ENCODE measurements at regions of chr1 and their contacts with region 1.

Region 1: GRCh38 chr1:32933742-32934322 is 30.8 kb downstream of the RNF19B start:
- DNase-seq: no peak
- H3K4me3 ChIP-seq: no peak overlapping the region
- H3K27ac ChIP-seq: no peak overlapping the region
- H3K4me1 ChIP-seq: no peaks in the 10 kb centered on the region; a peak in 1 of 7 replicates
- H3K27me3 ChIP-seq: no peaks in the 10 kb centered on the region; a peak in 1 of 7 replicates
- CTCF ChIP-seq: no peak
- EP300 ChIP-seq: no peak
- POLR2A ChIP-seq: no peak
- RAD21 ChIP-seq: no peak

Region 2: GRCh38 chr1:32900951-32901822 is 32.6 kb before region 1 on chr1 and contains the start of gene TMEM54:
- CTCF ChIA-PET with region 1: interaction called, 22 read pairs
- POLR2A ChIA-PET with region 1: no interaction called
- DNase-seq: peak in 1 of 2 experiments; percentile 69
- H3K4me3 ChIP-seq: peak within 1 kb of the TSS; percentile 38 to 67 (median 42)
- H3K27ac ChIP-seq: no peak within 1 kb of the TSS
- H3K4me1 ChIP-seq: peaks cover 0 to 11% (median 8%) of the 10 kb centered on the region in 4 experiments; a peak in 6 of 7 replicates
- H3K27me3 ChIP-seq: peaks cover 14 to 40% (median 34%) of the 10 kb centered on the region in 4 experiments
- CTCF ChIP-seq: no peak
- EP300 ChIP-seq: no peak
- POLR2A ChIP-seq: no peak
- RAD21 ChIP-seq: no peak
- total RNA-seq, gene TMEM54: 7.3 and 9.5 TPM in 2 replicates

Region 3: GRCh38 chr1:32944180-32944579 is 10.3 kb after region 1 on chr1:
- CTCF ChIA-PET with region 1: interaction called, 11 read pairs
- POLR2A ChIA-PET with region 1: interaction called, 3 read pairs
- DNase-seq: no peak
- H3K4me3 ChIP-seq: no peak overlapping the region
- H3K27ac ChIP-seq: no peak overlapping the region
- H3K4me1 ChIP-seq: no peaks in the 10 kb centered on the region
- H3K27me3 ChIP-seq: no peaks in the 10 kb centered on the region
- CTCF ChIP-seq: no peak
- EP300 ChIP-seq: no peak
- POLR2A ChIP-seq: no peak
- RAD21 ChIP-seq: no peak

Region 4: DNA sequence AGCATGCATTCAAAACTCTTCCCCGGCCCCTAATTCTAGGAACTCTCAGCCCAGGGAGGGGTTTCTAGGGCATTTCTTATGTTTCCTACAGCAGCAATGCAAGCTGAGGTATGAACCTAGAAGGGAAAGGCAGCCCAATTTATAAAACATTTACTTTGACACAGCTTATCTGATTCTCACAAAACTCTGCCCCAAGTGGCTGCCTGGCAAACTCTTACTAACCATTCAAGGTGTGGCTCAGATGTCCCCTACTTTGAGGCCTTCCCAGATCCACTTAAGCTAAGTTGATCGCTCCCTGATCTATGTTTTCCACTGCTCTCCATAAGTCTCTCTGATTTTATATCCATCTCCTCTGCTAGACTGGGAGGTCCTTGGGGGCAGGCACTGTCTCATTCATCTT is 67.5 kb after region 1 on chr1:
- CTCF ChIA-PET with region 1: interaction called, 64 read pairs
- POLR2A ChIA-PET with region 1: interaction called, 3 read pairs
- DNase-seq: no peak
- H3K4me3 ChIP-seq: no peak overlapping the region
- H3K27ac ChIP-seq: no peak overlapping the region
- H3K4me1 ChIP-seq: peaks cover 0 to 9% (median 5%) of the 10 kb centered on the region in 4 experiments; a peak in 4 of 7 replicates
- H3K27me3 ChIP-seq: no peaks in the 10 kb centered on the region
- CTCF ChIP-seq: peak in 2 of 3 experiments; percentile 49 to 60; a peak in 3 of 4 replicates
- EP300 ChIP-seq: no peak
- POLR2A ChIP-seq: no peak
- RAD21 ChIP-seq: peak; percentile 24 to 49; a peak in 3 of 4 replicates

Region 5: GRCh38 chr1:33045246-33045645 is 111.4 kb after region 1 on chr1:
- CTCF ChIA-PET with region 1: interaction called, 10 read pairs
- POLR2A ChIA-PET with region 1: no interaction called
- DNase-seq: no peak
- H3K4me3 ChIP-seq: no peak overlapping the region
- H3K27ac ChIP-seq: no peak overlapping the region
- H3K4me1 ChIP-seq: peaks cover 0 to 3% (median 1%) of the 10 kb centered on the region in 4 experiments; a peak in 2 of 7 replicates
- H3K27me3 ChIP-seq: no peaks in the 10 kb centered on the region
- CTCF ChIP-seq: no peak
- EP300 ChIP-seq: no peak
- POLR2A ChIP-seq: no peak
- RAD21 ChIP-seq: no peak

Region 6: DNA sequence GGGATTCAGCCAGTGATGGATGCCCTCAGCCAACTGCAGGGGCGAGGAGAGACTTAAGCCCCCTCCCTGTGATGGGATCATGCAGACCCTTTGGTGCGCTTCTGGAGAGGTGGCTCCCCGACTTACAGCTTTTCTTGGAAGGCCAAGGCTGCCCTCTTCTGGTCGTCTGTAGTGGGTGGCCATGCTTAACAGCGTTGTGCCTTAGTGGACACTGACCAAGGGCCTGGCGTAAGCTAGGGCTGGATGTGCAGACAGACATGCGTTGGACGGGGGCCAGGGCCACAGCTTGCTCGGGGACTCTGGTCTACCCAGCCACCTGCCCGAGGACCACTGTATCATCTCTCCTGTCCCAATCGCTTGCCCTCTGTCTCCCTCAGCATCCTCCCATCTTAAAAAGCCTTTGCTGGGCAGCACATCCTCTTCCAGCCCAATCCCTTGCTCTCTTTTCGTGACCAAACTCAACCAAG is 152.6 kb after region 1 on chr1:
- CTCF ChIA-PET with region 1: interaction called, 77 read pairs
- POLR2A ChIA-PET with region 1: interaction called, 3 read pairs
- DNase-seq: peak; percentile 41 to 81
- H3K4me3 ChIP-seq: no peak overlapping the region
- H3K27ac ChIP-seq: no peak overlapping the region
- H3K4me1 ChIP-seq: peaks cover 0 to 3% (median under 1%) of the 10 kb centered on the region in 4 experiments; a peak in 2 of 7 replicates
- H3K27me3 ChIP-seq: peaks cover 10 to 40% (median 31%) of the 10 kb centered on the region in 4 experiments
- CTCF ChIP-seq: peak; percentile 75 to 93 (median 90)
- EP300 ChIP-seq: no peak
- POLR2A ChIP-seq: no peak
- RAD21 ChIP-seq: peak; percentile 91 to 94